Mammary epithelial cell (primary cell): ENCODE measurements at regions of chr5 and their contacts with region 1.

Region 1: DNA sequence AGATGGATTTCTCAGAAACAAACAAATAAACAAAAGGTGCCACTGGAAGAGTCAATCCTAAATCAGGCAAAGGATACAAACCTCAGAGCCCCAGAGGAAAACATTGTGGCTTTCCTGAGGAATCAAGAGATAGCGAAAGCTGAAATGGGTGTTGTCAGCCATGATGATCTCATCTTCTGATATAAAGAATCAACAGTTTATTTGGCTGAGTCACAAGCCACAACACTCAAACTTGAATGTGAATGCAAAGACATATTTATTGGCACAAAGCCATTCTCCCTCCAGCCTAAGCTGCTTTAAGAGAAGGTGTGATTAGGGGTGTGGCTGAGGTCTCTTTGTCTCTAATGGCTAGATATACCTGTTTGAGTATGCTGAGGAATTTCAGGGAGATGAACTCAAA is 73.3 kb upstream of the NREP start:
- DNase-seq: peak; percentile 94
- H3K4me3 ChIP-seq: no peak overlapping the region
- H3K27ac ChIP-seq: peak overlapping the region; percentile 18
- H3K4me1 ChIP-seq: peaks cover 7% of the 10 kb centered on the region
- H3K27me3 ChIP-seq: peaks cover 13% of the 10 kb centered on the region
- CTCF ChIP-seq: no peak

Region 2: GRCh38 chr5:111680737-111681413 is 149.5 kb before region 1 on chr5:
- CTCF ChIA-PET with region 1: no interaction called
- dilution Hi-C with region 1: no loop called
- in situ Hi-C with region 1: no loop called
- intact Hi-C with region 1: loop called (anchors 5 kb)
- DNase-seq: peak; percentile 96
- H3K4me3 ChIP-seq: no peak overlapping the region
- H3K27ac ChIP-seq: peak overlapping the region; percentile 67
- H3K4me1 ChIP-seq: peaks cover 28% of the 10 kb centered on the region
- H3K27me3 ChIP-seq: no peaks in the 10 kb centered on the region
- CTCF ChIP-seq: no peak

Region 3: DNA sequence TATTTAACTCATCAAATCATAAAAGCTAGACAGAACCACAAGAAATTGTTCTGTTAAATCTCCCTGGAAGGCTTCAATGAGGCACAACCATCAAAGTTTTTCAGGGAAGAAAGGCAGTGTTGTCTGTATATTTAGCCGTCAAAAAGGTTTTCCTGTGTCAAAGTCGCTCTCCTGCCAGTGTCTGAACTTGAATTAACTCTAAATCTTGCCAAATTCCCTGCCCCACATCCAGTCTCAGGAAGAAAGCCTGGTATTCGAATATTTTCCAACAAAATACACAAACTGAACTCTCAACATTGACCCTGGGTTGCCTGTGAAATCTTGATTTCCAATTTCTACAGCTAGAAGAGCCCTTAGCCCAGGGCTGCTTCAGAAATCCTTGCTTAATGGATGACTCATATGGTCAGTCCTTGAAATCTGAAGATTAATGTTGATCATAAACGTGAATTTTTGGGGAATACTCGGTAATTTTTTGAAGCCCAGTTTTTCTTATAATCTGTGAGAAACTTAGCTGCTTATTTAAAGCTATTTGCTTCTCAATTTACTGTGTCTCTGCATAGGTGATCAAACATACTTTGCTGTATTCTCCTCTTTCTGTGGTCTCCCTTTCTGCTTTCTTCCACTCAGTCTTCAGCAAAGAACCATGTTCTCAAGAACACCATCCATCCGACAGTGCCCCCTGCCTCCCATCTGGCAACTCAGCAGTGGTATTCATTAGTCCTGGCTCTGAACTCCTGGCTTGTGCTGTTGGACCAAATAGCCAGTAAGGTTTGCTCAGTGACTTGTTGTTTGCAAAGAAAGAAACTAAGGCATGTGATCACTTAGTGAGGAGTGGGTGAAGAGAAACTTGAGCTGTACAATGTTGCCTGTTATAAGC is 132.2 kb before region 1 on chr5:
- CTCF ChIA-PET with region 1: no interaction called
- dilution Hi-C with region 1: no loop called
- in situ Hi-C with region 1: no loop called
- intact Hi-C with region 1: loop called (anchors 5 kb)
- DNase-seq: no peak
- H3K4me3 ChIP-seq: no peak overlapping the region
- H3K27ac ChIP-seq: no peak overlapping the region
- H3K4me1 ChIP-seq: peaks cover 34% of the 10 kb centered on the region
- H3K27me3 ChIP-seq: no peaks in the 10 kb centered on the region
- CTCF ChIP-seq: peak in 1 of 2 donors; percentile 4

Region 4: DNA sequence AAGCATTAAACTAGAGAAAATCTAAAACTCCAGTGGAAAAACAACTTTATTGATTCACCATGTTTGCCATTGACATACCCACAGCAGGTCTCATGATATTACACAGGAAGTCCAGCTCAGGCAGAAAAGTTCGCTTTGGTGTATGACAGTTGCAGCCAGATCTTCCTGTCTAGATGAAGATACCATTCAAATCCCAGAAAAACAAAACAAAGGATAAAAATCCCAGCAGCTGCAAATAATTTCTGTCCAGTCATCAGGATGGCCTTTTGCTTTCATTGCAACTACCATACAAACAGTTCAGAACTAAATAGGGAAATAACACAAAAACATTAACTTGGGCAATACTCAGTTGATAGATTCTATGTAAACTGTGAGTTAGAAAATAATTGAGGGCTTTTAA is 62.6 kb after region 1 on chr5:
- CTCF ChIA-PET with region 1: no interaction called
- dilution Hi-C with region 1: no loop called
- in situ Hi-C with region 1: no loop called
- intact Hi-C with region 1: no loop called
- DNase-seq: no peak
- H3K4me3 ChIP-seq: no peak overlapping the region
- H3K27ac ChIP-seq: no peak overlapping the region
- H3K4me1 ChIP-seq: no peaks in the 10 kb centered on the region
- H3K27me3 ChIP-seq: no peaks in the 10 kb centered on the region
- CTCF ChIP-seq: no peak